Caco-2 (cell line): ENCODE measurements at regions of chr9 and their contacts with region 1.

Region 1: DNA sequence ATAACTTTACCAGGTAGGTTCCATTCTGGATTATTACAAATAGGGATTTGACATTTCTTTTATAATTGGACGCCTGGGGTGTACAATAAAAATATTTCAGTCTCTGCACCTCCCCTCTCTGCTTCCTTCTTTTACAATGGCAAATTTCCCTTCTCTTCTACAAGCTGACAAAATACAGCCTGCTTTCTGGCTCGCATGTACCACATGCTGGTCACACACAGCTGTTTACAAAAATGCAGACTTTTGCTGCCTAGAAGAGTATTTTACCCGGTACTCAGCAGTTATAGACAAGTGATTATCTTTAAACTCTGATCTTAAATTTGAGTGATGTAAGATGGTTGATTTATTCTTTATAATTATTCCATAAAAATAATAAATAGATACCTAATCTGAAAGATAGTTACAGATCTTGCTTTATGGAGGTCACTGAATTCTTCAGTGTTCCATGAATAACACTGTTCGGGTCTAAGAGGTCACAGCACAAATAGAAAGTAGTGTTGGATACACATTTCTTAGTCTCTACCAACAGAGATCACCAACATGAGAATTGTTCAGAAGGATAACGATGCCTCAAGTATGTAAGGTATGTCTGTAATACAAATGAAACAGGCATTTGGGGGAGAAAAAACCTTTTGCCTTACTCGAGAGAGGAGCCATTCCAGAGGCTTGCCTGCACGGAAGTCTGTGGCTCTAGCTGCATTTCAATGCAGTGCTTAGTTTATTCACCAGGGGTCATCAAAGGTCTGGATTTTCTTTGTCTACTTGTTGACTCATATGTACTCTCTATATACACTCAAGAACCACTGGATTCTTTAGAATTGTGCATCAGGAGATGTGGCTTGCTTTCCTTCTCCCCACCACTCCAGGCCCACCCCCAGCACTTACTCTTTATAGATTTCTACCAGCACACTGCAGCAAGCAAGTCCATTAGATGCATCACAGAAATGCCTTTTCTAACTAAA is 206.6 kb upstream of the RFX3 start:
- DNase-seq: peak; percentile 42 to 75
- H3K4me3 ChIP-seq: no peak overlapping the region
- H3K4me3 Mint-ChIP-seq: peak overlapping the region; percentile 33
- H3K27ac Mint-ChIP-seq: no peak overlapping the region
- H3K4me1 ChIP-seq: peaks cover 12% of the 10 kb centered on the region
- H3K4me1 Mint-ChIP-seq: peaks cover 10% of the 10 kb centered on the region
- H3K27me3 ChIP-seq: no peaks in the 10 kb centered on the region
- H3K27me3 Mint-ChIP-seq: peaks cover under 1% of the 10 kb centered on the region
- CTCF ChIP-seq: peak; percentile 49

Region 2: DNA sequence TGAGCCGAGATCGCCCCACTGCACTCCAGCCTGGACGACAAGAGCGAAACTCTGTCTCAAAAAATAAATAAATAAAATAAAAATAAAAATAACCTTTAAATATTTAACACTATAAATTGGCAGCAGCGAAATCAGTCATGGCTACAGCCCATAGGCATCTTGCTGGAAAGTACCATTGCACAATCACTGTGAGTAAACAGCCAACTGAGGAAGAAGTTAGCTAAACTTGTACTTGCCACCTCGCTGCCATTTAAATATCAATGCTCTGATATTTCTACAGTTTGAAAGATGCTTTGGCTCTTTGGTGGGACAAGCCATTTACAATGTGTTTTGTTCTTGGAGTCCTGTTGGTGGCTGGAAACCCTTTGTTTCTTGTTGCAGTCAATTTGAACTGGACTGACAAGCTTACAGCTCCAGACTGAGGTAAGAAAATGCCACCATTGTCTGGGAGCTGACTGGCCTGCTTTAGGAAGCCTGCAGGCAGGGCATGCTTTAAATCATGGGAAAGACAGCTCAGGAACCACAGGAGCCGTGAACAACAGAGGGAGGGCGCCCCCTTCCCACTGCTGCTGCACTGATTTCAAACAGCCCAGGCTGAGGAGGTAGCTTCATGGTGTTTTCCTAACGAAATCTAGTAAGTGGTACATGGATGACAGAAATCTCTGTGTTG is 116.2 kb after region 1 on chr9:
- CTCF ChIA-PET with region 1: interaction called, 3 read pairs
- POLR2A ChIA-PET with region 1: no interaction called
- intact Hi-C with region 1: loop called (anchors 10 kb)
- DNase-seq: peak; percentile 30 to 39
- H3K4me3 ChIP-seq: no peak overlapping the region
- H3K4me3 Mint-ChIP-seq: no peak overlapping the region
- H3K27ac Mint-ChIP-seq: no peak overlapping the region
- H3K4me1 ChIP-seq: no peaks in the 10 kb centered on the region
- H3K4me1 Mint-ChIP-seq: no peaks in the 10 kb centered on the region
- H3K27me3 ChIP-seq: no peaks in the 10 kb centered on the region
- H3K27me3 Mint-ChIP-seq: no peaks in the 10 kb centered on the region
- CTCF ChIP-seq: peak in 1 of 2 experiments; percentile 18

Region 3: GRCh38 chr9:3980771-3981170 is 248.4 kb after region 1 on chr9:
- CTCF ChIA-PET with region 1: no interaction called
- POLR2A ChIA-PET with region 1: no interaction called
- intact Hi-C with region 1: no loop called
- DNase-seq: no peak
- H3K4me3 ChIP-seq: no peak overlapping the region
- H3K4me3 Mint-ChIP-seq: no peak overlapping the region
- H3K27ac Mint-ChIP-seq: no peak overlapping the region
- H3K4me1 ChIP-seq: no peaks in the 10 kb centered on the region
- H3K4me1 Mint-ChIP-seq: no peaks in the 10 kb centered on the region
- H3K27me3 ChIP-seq: no peaks in the 10 kb centered on the region
- H3K27me3 Mint-ChIP-seq: no peaks in the 10 kb centered on the region
- CTCF ChIP-seq: no peak

Region 4: GRCh38 chr9:4077499-4078102 is 345.2 kb after region 1 on chr9:
- CTCF ChIA-PET with region 1: no interaction called
- POLR2A ChIA-PET with region 1: no interaction called
- intact Hi-C with region 1: loop called (anchors 1 kb)
- DNase-seq: peak; percentile 49 to 69
- H3K4me3 ChIP-seq: no peak overlapping the region
- H3K4me3 Mint-ChIP-seq: no peak overlapping the region
- H3K27ac Mint-ChIP-seq: no peak overlapping the region
- H3K4me1 ChIP-seq: peaks cover 20% of the 10 kb centered on the region
- H3K4me1 Mint-ChIP-seq: peaks cover 26% of the 10 kb centered on the region
- H3K27me3 ChIP-seq: no peaks in the 10 kb centered on the region
- H3K27me3 Mint-ChIP-seq: no peaks in the 10 kb centered on the region
- CTCF ChIP-seq: peak; percentile 36 to 50

Region 5: DNA sequence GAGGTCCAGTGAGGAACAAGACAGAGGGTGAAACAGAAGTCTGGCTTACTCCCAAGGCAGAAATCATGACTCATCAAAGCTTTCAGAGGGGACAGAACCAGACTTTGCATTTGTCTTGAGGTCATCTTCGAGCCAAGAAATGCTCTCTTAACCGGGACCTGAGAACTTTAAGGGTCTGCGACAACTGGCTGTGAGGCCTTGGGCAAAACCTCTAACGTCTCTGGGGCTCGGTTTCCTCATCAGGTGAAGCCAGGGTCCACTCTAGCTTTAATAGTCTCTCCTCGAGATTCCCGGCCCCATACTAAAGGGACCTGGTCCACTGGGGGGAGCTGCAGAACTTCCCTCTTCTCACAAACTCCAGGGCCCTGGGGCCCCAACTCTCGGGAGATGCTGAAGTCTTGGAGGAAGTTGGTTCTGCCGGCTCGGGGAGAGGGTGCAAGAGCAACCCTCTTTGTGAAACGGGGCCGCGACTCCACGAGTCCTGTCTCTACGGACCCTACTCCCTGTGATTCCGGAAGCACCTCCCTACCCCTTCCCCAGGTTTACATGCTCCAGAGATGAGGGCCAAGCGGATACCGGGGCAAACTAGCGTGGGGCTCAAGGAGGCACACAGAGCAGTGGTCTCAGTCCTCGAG is 564.9 kb after region 1 on chr9:
- CTCF ChIA-PET with region 1: no interaction called
- POLR2A ChIA-PET with region 1: interaction called, 3 read pairs
- intact Hi-C with region 1: loop called (anchors 1 kb)
- DNase-seq: peak; percentile 79 to 84
- H3K4me3 ChIP-seq: peak overlapping the region; percentile 66
- H3K4me3 Mint-ChIP-seq: peak overlapping the region; percentile 84
- H3K27ac Mint-ChIP-seq: peak overlapping the region; percentile 69
- H3K4me1 ChIP-seq: peaks cover 21% of the 10 kb centered on the region
- H3K4me1 Mint-ChIP-seq: no peaks in the 10 kb centered on the region
- H3K27me3 ChIP-seq: no peaks in the 10 kb centered on the region
- H3K27me3 Mint-ChIP-seq: no peaks in the 10 kb centered on the region
- CTCF ChIP-seq: peak in 1 of 2 experiments; percentile 33

Region 6: GRCh38 chr9:4375424-4376200 is 643.3 kb after region 1 on chr9:
- CTCF ChIA-PET with region 1: interaction called, 8 read pairs
- POLR2A ChIA-PET with region 1: no interaction called
- intact Hi-C with region 1: loop called (anchors 2 kb)
- DNase-seq: peak in 1 of 2 experiments; percentile 7
- H3K4me3 ChIP-seq: no peak overlapping the region
- H3K4me3 Mint-ChIP-seq: no peak overlapping the region
- H3K27ac Mint-ChIP-seq: no peak overlapping the region
- H3K4me1 ChIP-seq: peaks cover 6% of the 10 kb centered on the region; the same call in 1 of the 2 replicates
- H3K4me1 Mint-ChIP-seq: no peaks in the 10 kb centered on the region
- H3K27me3 ChIP-seq: no peaks in the 10 kb centered on the region
- H3K27me3 Mint-ChIP-seq: no peaks in the 10 kb centered on the region
- CTCF ChIP-seq: peak in 1 of 2 experiments; percentile 18